Brain microvascular endothelial cell (primary cell): ENCODE measurements at regions of chr15 and their contacts with region 1.

Region 1: DNA sequence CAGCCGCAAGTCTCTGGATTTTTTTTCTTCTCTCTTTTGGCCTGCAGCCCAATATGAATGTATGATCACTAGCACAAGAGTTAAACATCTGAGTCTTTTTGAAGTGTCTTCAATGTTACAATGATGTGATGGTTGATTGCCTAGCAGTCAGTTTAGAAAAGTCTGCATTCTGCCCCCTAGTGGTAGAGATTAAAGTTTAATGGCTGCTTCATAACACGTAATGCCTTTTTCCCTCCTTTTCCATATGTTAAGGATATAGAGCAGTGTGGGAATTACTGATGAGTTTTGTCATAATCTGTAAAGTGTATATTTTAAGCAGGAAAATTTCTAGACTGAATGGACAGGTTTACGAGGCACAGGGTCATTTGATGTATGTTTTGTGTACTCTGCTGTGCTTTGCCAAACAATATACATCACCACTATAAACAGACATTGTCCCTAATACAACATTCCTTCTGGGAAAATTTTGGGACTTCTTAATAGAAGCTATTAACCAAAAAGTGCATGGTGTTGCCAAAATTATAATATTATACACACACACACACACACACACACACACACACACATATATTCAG is 1038.5 kb upstream of the NR2F2 start:
- DNase-seq: peak; percentile 39
- H3K4me3 ChIP-seq: no peak overlapping the region
- H3K27ac ChIP-seq: no peak overlapping the region
- H3K27me3 ChIP-seq: no peaks in the 10 kb centered on the region
- CTCF ChIP-seq: peak; percentile 60

Region 2: GRCh38 chr15:96047255-96047931 is 755.4 kb after region 1 on chr15:
- in situ Hi-C with region 1: loop called (anchors 25 kb)
- DNase-seq: peak; percentile 91
- H3K4me3 ChIP-seq: peak overlapping the region; percentile 2
- H3K27ac ChIP-seq: peak overlapping the region; percentile 91
- H3K27me3 ChIP-seq: no peaks in the 10 kb centered on the region
- CTCF ChIP-seq: peak; percentile 34

Region 3: GRCh38 chr15:96330450-96331145 is 1038.6 kb after region 1 on chr15 and contains the start of gene NR2F2:
- in situ Hi-C with region 1: loop called (anchors 25 kb)
- DNase-seq: peak; percentile 99
- H3K4me3 ChIP-seq: peak within 1 kb of the TSS; percentile 94
- H3K27ac ChIP-seq: peak within 1 kb of the TSS; percentile 92
- H3K27me3 ChIP-seq: no peaks in the 10 kb centered on the region
- CTCF ChIP-seq: no peak